Heart right ventricle (tissue), 16 donors: ENCODE measurements at regions of chr1 and their contacts with region 1.

Region 1: GRCh38 chr1:39816415-39817090 is 27.9 kb upstream of the BMP8B start:
- DNase-seq: peak; percentile 50 to 72
- ATAC-seq: peak; percentile 70 to 91 (median 78)
- H3K4me3 ChIP-seq: no peak overlapping the region
- H3K27ac ChIP-seq: no peak overlapping the region
- H3K4me1 ChIP-seq: peaks cover 0 to 11% (median 0%) of the 10 kb centered on the region in 9 donors
- H3K27me3 ChIP-seq: peaks cover 0 to 25% (median 0%) of the 10 kb centered on the region in 7 donors
- CTCF ChIP-seq: peak; percentile 67 to 83 (median 81)

Region 2: GRCh38 chr1:39901698-39902459 is 85.3 kb after region 1 on chr1 and contains the start of gene MYCL:
- intact Hi-C with region 1: loop called (anchors 1 to 5 kb)
- DNase-seq: peak; percentile 52 to 66
- ATAC-seq: peak; percentile 77 to 91 (median 86)
- H3K4me3 ChIP-seq: peak within 1 kb of the TSS; percentile 43 to 75 (median 64)
- H3K27ac ChIP-seq: peak within 1 kb of the TSS in 2 of 10 donors; percentile 9 to 64
- H3K4me1 ChIP-seq: peaks cover 3 to 19% (median 16%) of the 10 kb centered on the region in 9 donors
- H3K27me3 ChIP-seq: peaks cover 0 to 71% (median 55%) of the 10 kb centered on the region in 7 donors
- CTCF ChIP-seq: peak; percentile 43 to 81 (median 75)
- total RNA-seq, gene MYCL: 0.30 to 2.5 (median 0.76) TPM

Region 3: GRCh38 chr1:39973503-39974135 is 157.1 kb after region 1 on chr1:
- intact Hi-C with region 1: loop called (anchors 1 to 5 kb)
- DNase-seq: peak; percentile 70 to 73
- ATAC-seq: peak; percentile 72 to 90 (median 78)
- H3K4me3 ChIP-seq: no peak overlapping the region
- H3K27ac ChIP-seq: no peak overlapping the region
- H3K4me1 ChIP-seq: peaks cover 0 to 6% (median 0%) of the 10 kb centered on the region in 9 donors
- H3K27me3 ChIP-seq: peaks cover 0 to 16% (median 0%) of the 10 kb centered on the region in 7 donors
- CTCF ChIP-seq: peak; percentile 89 to 99 (median 97)

Region 4: DNA sequence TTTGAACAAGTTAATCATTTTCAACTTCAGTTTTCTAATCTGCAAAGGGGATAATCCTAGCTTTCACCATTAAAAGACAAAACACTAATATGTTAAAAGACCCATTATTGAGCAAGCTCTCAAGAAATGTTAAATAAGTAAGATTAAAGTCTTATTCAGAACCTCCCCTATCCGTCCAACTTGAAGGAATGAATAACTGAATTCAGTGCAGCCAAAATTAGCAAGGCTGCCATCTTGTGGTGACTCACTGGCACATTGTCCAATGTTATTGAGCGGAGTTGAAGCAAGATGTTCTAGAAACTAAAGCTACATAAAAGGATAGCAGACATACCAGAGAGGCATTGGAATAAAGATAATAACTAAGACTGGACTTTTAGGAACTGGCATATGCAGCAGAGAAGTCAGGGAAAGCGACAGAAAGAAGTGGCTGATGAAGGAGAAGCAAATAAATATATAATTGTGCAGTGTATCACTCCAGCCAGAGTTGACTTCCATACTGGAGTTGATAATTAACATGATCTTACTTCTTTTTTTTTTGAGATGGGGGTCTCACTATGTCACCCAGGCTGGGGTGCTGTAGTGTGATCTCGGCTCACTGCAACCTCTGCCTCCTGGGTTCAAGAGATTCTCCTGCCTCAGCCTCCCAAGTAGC is 215.8 kb after region 1 on chr1:
- intact Hi-C with region 1: loop called in 4 of 10 experiments (anchors 2 to 10 kb)
- DNase-seq: peak in 1 of 2 donors; percentile 41
- ATAC-seq: peak in 2 of 8 donors; percentile 22 to 54
- H3K4me3 ChIP-seq: no peak overlapping the region
- H3K27ac ChIP-seq: no peak overlapping the region
- H3K4me1 ChIP-seq: peaks cover 0 to 43% (median 25%) of the 10 kb centered on the region in 9 donors
- H3K27me3 ChIP-seq: no peaks in the 10 kb centered on the region
- CTCF ChIP-seq: peak; percentile 29 to 83 (median 72)

Region 5: DNA sequence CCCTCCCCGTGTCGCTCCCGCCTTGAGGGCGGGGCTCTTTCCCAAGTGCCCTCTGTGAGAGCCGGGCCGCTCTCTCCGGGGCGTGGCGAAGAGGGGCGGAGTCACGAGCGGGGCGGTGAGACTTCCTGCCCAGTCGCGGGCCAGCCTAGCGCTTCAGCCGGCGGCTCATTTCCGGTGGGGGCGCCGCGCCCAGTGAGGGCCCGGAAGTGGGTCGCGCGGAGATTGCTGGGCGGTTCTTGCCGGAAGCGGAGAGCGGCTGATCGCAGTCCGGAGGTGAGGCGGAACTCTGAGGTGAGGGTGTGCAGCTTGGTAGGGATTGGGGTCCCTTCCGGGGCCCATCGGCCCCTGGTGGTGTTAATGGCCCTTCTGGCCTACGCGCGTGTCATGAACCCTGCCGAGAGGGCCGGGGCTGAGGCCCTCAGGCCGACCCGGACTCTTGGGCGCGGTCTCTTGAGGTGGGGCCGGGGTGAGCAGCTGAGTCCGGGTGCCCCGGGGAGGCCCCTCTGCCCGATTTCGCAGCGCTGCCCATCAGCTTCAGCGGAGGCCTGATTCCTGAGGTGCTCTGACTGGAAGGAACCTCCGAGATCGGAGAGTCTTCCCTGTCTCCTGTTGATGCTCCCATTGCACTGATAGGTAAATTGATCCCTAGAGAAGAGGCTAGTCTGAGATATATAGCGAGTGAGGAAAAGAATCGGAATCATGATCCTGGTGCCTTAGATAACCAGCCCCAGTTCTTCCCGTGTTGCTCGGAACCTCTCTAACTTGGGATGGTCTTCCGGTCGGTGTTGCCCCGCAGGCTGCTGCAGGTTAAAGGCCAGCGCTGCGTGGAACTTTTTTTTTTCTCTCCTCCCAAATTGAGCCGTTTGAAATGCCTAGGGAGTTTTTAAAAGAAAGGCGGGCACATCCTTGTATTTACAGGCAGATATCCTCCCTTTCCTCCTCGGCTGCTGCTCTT is 224.2 kb after region 1 on chr1 and contains the start of gene CAP1:
- intact Hi-C with region 1: loop called in 1 of 10 experiments (anchors 10 kb)
- DNase-seq: peak; percentile 99 to 100
- ATAC-seq: peak; percentile 94 to 97 (median 96)
- H3K4me3 ChIP-seq: peak within 1 kb of the TSS; percentile 64 to 99 (median 91)
- H3K27ac ChIP-seq: peak within 1 kb of the TSS; percentile 97 to 100 (median 100)
- H3K4me1 ChIP-seq: peaks cover 6 to 85% (median 75%) of the 10 kb centered on the region in 9 donors
- H3K27me3 ChIP-seq: no peaks in the 10 kb centered on the region
- CTCF ChIP-seq: no peak
- total RNA-seq, gene CAP1: 46.4 to 157 (median 55.8) TPM

Region 6: DNA sequence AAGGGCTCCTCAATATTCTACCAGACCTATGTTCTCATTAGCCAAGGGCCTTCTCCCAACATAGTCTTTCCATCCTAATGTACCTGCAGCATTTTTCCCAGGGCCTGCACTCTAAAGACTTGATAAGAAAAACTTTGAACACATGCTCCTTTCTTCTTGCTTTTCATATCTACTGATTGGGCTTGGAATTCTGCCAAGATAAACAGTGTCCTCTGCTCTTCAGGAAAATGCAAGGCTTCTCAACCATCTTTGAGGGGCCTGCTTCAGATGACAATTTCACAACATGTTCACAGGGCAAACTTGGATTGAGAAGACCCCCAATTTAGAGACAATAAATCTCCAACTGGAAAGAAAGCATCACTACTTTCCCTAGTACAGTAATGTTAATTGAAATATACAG is 306.3 kb after region 1 on chr1:
- intact Hi-C with region 1: no loop called
- DNase-seq: no peak
- ATAC-seq: no peak
- H3K4me3 ChIP-seq: no peak overlapping the region
- H3K27ac ChIP-seq: no peak overlapping the region
- H3K4me1 ChIP-seq: no peaks in the 10 kb centered on the region
- H3K27me3 ChIP-seq: peaks cover 0 to 41% (median 6%) of the 10 kb centered on the region in 7 donors
- CTCF ChIP-seq: no peak